ENCODE measurements at regions of chr2 and their contacts with region 1.

Region 1: DNA sequence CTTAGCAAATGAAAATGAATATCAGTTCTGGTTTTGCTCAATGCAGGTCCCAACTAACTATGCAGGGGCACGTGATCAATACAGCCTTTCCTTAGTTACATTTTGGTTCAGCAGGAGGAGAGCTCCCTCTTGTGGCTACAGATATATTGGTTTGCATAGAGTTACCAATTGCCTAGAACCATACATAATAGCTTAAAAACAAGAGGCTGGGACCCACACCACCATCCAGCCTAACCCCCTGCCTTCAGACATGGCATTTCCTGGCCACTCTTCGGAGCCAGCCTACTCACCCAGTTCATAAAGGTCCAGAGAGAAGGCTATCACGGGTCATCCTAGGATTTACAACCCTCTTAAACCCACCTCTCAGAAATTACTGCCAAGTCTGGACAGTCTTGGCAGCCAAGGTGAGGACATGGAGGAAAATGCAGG is 10.5 kb downstream of the CCDC93 start:
- DNase-seq: peak; percentile 36
- H3K4me3 ChIP-seq: no peak overlapping the region
- CTCF ChIP-seq: peak; percentile 73

Region 2: GRCh38 chr2:117814417-117815264 is 188.8 kb before region 1 on chr2 and contains the start of gene DDX18:
- CTCF ChIA-PET with region 1: interaction called, 264 read pairs
- POLR2A ChIA-PET with region 1: interaction called, 3 read pairs
- DNase-seq: peak; percentile 84
- H3K4me3 ChIP-seq: peak within 1 kb of the TSS; percentile 96
- CTCF ChIP-seq: peak; percentile 99

Region 3: DNA sequence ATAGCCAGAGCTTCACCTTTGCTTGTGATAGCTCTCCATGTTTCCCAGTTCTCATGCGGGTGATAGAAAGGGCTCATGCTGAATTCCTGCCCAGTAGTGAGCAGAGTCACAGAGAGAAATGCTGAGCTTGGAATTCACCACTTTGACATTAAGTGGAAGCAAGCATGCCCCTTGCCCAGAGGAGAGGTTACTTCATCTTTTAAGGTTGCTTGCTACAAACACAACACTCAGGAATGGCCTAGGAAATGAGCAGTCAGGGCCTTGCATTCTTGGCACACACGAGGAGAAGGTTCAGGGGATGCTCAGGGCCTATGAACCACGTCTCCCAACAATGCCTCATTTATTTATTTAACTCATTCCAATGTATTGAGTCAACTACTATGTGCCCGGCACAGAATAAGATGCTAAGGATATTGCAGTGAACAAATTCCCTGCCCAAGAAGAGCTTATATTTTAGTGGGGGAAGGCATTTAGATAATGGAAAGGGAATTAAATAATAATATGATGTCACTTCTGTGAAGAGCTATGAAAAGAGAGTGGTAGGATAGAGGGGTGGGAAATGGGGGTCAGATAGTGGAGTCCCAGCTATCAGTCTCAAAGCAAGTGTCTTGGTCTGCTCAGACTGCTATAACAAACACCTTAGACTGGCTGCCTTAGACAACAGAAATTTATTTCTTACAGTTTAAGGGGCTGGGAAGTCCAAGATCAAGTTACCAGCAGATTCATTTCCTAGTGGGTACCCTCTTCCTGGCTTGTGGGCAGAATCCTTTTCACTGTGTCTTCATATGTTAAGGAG is 146.8 kb before region 1 on chr2:
- CTCF ChIA-PET with region 1: interaction called, 32 read pairs
- POLR2A ChIA-PET with region 1: no interaction called
- DNase-seq: peak; percentile 90
- H3K4me3 ChIP-seq: no peak overlapping the region
- CTCF ChIP-seq: no peak

Region 4: GRCh38 chr2:117943013-117943672 is 60.3 kb before region 1 on chr2:
- CTCF ChIA-PET with region 1: interaction called, 52 read pairs
- POLR2A ChIA-PET with region 1: no interaction called
- DNase-seq: peak; percentile 79
- H3K4me3 ChIP-seq: no peak overlapping the region
- CTCF ChIP-seq: no peak

Region 5: DNA sequence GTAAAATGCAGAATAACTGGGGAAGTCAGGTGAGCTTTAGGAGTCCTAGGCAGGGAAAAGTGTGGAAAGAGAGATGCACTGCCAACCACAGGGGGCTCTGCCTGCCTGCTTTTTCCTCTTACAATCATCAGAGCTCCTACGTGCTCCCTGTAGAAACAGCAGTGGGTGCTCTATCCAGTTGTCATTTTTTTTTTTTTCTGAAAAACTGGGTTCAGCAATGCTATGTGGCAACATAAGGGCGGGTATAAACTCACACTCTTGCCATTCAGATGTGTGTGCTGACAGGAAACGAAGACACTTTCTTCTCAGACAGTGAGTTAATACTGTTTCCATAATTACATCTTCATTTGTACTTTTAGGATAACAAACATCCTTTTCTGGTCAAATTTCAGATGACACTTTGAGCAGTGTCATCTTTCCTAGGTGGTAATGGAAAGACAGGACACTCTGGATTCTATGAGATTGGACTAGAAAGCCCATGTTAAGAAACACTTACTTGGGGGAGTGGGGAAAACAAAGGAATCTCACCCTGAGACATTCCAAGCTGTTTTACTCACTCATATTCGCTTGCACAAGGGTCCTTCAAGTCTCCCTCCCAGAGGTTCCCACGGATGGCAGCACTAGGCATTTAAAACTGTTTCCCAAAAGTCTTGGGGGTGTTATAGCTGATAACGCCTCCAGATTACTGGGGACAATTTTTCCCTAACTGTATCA is 30.8 kb before region 1 on chr2:
- CTCF ChIA-PET with region 1: interaction called, 55 read pairs
- POLR2A ChIA-PET with region 1: no interaction called
- DNase-seq: no peak
- H3K4me3 ChIP-seq: no peak overlapping the region
- CTCF ChIP-seq: no peak

Region 6: GRCh38 chr2:118046634-118047210 is 43.3 kb after region 1 on chr2:
- CTCF ChIA-PET with region 1: interaction called, 11 read pairs
- POLR2A ChIA-PET with region 1: no interaction called
- DNase-seq: no peak
- H3K4me3 ChIP-seq: no peak overlapping the region
- CTCF ChIP-seq: peak; percentile 45

Region 7: DNA sequence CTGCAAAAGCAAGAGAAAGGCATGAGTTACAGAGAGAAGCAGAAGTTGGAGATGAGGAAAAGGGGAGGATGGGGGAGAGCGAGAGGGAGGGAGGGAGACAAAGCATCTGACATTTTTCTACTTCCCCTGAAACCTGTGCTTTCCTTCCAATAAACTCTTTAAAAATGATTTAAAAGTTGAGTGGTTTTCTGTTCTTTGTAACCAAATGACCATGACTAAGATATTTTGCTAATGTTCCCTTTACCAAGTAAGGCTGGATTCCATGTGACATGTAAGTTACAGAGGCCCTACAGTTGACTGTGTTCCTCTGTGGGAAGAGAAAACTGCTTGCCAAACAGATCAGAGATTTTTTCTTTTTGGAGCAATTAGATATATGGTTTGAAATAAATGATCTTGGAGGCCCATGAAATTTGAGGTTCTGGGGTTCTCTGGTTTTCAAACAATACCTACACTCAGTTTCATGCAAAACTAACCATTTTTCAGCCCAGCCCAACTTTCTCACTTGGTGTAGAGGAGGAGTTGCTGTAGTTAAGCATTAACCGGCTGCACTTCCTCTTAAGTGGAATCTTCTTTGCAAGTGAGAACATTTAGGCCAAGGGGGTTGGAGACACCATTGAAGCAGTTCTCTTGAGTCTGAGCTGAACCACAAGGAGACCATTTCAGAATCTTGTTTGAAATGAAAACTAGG is 119.3 kb after region 1 on chr2:
- CTCF ChIA-PET with region 1: no interaction called
- POLR2A ChIA-PET with region 1: no interaction called
- DNase-seq: no peak
- H3K4me3 ChIP-seq: no peak overlapping the region
- CTCF ChIP-seq: no peak